Gastrocnemius medialis (tissue), 4 donors: ENCODE measurements at regions of chr6 and their contacts with region 1.

Region 1: GRCh38 chr6:137866914-137867684 is at the start of gene TNFAIP3:
- DNase-seq: peak; percentile 86 to 91
- ATAC-seq: peak; percentile 89 to 90
- H3K4me3 ChIP-seq: peak within 1 kb of the TSS; percentile 67 to 96 (median 86)
- H3K27ac ChIP-seq: peak within 1 kb of the TSS; percentile 85 to 88 (median 86)
- H3K4me1 ChIP-seq: peaks cover 20 to 36% of the 10 kb centered on the region in 2 donors
- H3K27me3 ChIP-seq: no peaks in the 10 kb centered on the region
- CTCF ChIP-seq: peak; percentile 71 to 97 (median 92)
- POLR2A ChIP-seq: peak; percentile 51 to 79
- total RNA-seq, gene TNFAIP3: 2.6 to 7.1 (median 4.7) TPM

Region 2: GRCh38 chr6:138403801-138404661 is 536.9 kb after region 1 on chr6 and contains the start of gene HEBP2:
- in situ Hi-C with region 1: no loop called
- intact Hi-C with region 1: loop called (anchors 5 kb)
- DNase-seq: peak; percentile 95 to 96
- ATAC-seq: peak; percentile 89 to 93
- H3K4me3 ChIP-seq: peak within 1 kb of the TSS; percentile 65 to 92 (median 84)
- H3K27ac ChIP-seq: peak within 1 kb of the TSS; percentile 92 to 97 (median 94)
- H3K4me1 ChIP-seq: peaks cover 8 to 9% of the 10 kb centered on the region in 2 donors
- H3K27me3 ChIP-seq: no peaks in the 10 kb centered on the region
- CTCF ChIP-seq: peak in 4 of 5 experiments; percentile 39 to 79 (median 78)
- POLR2A ChIP-seq: peak; percentile 81 to 91
- total RNA-seq, gene HEBP2: 60.3 to 81.5 (median 74.8) TPM

Region 3: DNA sequence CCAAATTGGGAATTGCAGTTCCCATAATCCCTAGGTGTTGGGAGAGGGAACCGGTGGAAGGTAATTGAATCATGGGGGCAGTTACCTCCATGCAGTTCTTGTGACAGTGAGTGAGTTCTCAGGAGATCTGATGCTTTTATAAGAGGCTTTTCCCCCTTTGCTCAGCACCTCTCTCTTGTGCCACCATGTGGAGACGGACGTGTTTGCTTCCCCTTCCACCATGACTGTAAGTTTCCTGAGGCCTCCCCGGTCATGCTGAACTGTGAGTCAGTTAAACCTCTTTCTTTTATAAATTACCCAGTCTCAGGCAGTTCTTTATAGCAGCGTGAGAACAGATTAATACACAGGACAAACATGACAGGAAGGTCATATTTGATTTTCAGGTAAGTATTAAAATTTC is 1242.5 kb after region 1 on chr6:
- in situ Hi-C with region 1: no loop called
- intact Hi-C with region 1: no loop called
- DNase-seq: no peak
- ATAC-seq: no peak
- H3K4me3 ChIP-seq: no peak overlapping the region
- H3K27ac ChIP-seq: no peak overlapping the region
- H3K4me1 ChIP-seq: no peaks in the 10 kb centered on the region
- H3K27me3 ChIP-seq: no peaks in the 10 kb centered on the region
- CTCF ChIP-seq: peak in 2 of 5 experiments; percentile 31
- POLR2A ChIP-seq: no peak